Naive thymus-derived CD4-positive, alpha-beta T cell (primary cell): ENCODE measurements at regions of chr7 and their contacts with region 1.

Region 1: DNA sequence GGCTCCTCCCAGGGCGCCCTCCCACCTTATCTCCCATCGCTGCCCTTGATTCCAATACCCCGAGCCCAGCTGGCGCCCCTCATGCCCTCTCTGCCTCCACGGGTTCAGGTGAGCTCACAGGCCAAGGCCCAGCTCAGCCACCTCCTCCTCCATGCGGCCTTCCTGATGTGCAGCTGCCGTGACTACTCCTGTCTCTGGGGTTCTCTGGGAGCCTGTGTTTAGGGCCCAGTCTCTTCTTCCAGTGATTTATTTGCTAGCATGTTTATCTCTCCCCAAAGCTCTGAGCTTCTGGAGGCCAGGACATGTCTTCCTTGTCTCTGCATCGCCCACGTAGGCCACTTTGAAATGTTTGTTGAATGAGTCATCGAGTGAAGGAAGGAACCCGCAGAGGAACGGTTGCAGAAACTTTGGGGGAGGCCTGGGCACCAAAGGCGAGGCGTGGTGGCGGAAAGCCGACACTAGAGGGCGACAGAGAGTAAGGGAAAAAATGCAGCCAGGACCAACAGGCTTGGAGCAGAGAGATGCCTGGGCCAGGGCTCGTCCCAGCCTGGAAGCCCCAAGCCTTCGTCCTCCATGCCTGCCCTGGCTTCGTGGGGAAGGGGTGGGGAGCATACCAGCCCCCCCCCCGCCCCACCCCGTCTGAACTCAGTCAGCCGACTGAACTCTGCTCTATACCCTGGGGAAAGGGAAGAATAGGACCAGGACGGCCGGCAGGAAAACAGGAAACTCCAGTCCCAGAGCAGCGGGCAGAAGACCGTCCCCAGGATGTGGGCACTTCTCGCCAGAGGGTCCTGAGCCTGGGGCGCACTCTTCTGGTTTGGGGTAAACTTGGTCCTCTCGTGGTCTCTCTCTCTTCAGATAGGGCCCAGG is 10.9 kb upstream of the HSPB1 start:
- DNase-seq: peak; percentile 59 to 93 (median 75)
- ATAC-seq: peak; percentile 89
- H3K4me3 ChIP-seq: no peak overlapping the region
- H3K4me3 Mint-ChIP-seq: peak overlapping the region in 1 of 10 donors; percentile 38
- H3K27ac ChIP-seq: no peak overlapping the region
- H3K27ac Mint-ChIP-seq: peak overlapping the region in 4 of 9 donors; percentile 32 to 82 (median 72)
- H3K4me1 ChIP-seq: no peaks in the 10 kb centered on the region
- H3K4me1 Mint-ChIP-seq: peaks cover 0 to 20% (median 5%) of the 10 kb centered on the region in 7 donors
- H3K27me3 ChIP-seq: no peaks in the 10 kb centered on the region
- H3K27me3 Mint-ChIP-seq: peaks cover 0 to 6% (median 0%) of the 10 kb centered on the region in 5 donors

Region 2: DNA sequence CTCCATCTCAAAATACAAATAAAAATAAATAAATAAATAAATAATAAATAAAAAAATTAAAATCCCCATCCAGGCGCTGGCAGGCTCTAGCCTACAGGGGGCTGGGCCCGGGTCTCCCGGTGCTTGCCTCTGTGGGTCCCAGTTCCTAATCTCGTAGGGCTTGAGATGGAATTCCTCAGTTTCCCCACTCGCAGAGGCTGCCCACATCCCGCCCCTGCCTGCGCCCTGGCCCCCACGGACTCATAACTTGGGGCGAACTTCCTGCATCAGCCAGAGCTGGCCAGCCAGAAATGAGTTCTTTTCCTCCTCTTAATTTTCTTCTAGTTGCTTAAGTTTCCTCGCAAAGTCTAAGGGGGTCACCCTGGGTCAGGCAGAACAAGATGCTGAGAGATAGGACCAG is 111.9 kb before region 1 on chr7:
- CTCF ChIA-PET with region 1: interaction called, 7 read pairs
- POLR2A ChIA-PET with region 1: no interaction called
- intact Hi-C with region 1: loop called (anchors 1 to 2 kb)
- DNase-seq: no peak
- ATAC-seq: no peak
- H3K4me3 ChIP-seq: no peak overlapping the region
- H3K4me3 Mint-ChIP-seq: no peak overlapping the region
- H3K27ac ChIP-seq: no peak overlapping the region
- H3K27ac Mint-ChIP-seq: no peak overlapping the region
- H3K4me1 ChIP-seq: no peaks in the 10 kb centered on the region
- H3K4me1 Mint-ChIP-seq: peaks cover 2 to 7% (median 4%) of the 10 kb centered on the region in 7 donors
- H3K27me3 ChIP-seq: no peaks in the 10 kb centered on the region
- H3K27me3 Mint-ChIP-seq: peaks cover 0 to 2% (median 0%) of the 10 kb centered on the region in 5 donors

Region 3: DNA sequence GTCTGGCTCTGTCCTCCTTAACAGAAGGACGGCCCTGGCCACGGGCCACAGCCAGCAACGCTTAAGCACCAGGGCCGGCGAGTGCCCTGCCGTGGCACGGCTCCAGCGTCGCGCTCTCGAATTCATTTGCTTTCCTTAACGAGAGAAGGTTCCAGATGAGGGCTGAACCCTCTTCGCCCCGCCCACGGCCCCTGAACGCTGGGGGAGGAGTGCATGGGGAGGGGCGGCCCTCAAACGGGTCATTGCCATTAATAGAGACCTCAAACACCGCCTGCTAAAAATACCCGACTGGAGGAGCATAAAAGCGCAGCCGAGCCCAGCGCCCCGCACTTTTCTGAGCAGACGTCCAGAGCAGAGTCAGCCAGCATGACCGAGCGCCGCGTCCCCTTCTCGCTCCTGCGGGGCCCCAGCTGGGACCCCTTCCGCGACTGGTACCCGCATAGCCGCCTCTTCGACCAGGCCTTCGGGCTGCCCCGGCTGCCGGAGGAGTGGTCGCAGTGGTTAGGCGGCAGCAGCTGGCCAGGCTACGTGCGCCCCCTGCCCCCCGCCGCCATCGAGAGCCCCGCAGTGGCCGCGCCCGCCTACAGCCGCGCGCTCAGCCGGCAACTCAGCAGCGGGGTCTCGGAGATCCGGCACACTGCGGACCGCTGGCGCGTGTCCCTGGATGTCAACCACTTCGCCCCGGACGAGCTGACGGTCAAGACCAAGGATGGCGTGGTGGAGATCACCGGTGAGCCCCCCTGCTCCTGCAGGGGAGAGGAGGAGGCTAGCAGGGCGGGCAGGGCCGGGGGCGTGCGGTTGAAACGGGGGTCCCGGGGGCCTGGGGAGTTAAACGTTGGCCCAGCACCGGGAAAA is 11.0 kb after region 1 on chr7 and contains the start of gene HSPB1:
- CTCF ChIA-PET with region 1: interaction called, 5 read pairs
- POLR2A ChIA-PET with region 1: interaction called, 3 read pairs
- intact Hi-C with region 1: loop called (anchors 1 kb)
- DNase-seq: peak; percentile 31 to 54 (median 44)
- ATAC-seq: peak; percentile 65
- H3K4me3 ChIP-seq: peak within 1 kb of the TSS; percentile 81
- H3K4me3 Mint-ChIP-seq: peak within 1 kb of the TSS; percentile 87 to 96 (median 92)
- H3K27ac ChIP-seq: peak within 1 kb of the TSS; percentile 81
- H3K27ac Mint-ChIP-seq: peak within 1 kb of the TSS; percentile 76 to 95 (median 91)
- H3K4me1 ChIP-seq: peaks cover 0 to 5% of the 10 kb centered on the region in 2 donors
- H3K4me1 Mint-ChIP-seq: peaks cover 6 to 22% (median 17%) of the 10 kb centered on the region in 7 donors
- H3K27me3 ChIP-seq: no peaks in the 10 kb centered on the region
- H3K27me3 Mint-ChIP-seq: peaks cover 0 to 20% (median 0%) of the 10 kb centered on the region in 5 donors
- total RNA-seq, gene HSPB1: 26.3 to 47.2 (median 40.5) TPM